GM10248 (cell line): ENCODE measurements at regions of chr11 and their contacts with region 1.

Region 1: DNA sequence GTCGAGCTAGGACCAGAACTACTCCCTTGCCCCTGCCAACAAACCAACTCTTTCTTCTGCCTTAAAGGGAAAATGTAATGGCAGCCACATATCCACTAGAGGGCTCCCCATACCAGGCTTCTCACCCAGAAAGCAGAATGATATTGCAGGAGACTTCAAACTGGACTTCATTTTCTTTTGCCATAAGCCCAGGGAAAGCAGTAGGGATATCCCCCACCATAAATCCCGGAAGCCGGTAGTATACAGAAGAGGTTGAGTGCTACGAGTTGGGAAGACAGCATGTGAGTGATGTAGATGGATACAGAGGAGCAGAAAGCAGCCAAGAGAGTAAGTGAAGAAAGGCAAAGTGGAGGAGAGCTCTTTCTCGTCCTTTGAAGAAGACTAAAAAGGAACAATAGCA is 12.1 kb downstream of the PLAAT5 start:
- DNase-seq: peak; percentile 79
- CTCF ChIP-seq: peak; percentile 92

Region 2: DNA sequence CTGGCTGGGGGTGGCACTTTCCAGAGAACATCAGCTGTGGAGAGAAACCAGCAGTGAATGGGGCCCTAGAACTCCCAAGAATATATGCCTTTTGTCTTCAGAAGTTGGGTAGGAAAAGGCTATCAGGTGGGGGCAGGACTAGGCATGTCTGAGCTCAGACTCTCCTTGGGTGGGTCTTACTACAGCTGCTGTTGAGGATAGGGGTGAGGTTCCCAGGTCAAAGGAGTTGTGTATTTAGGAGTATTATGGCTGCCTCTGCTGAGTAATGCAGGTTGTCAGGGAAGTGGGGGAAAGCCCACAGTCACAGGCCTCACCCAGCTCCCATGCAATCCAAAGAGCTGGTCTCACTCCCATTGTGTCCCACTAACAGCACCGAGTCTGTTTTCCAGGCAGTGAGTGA is 83.2 kb before region 1 on chr11:
- CTCF ChIA-PET with region 1: no interaction called
- POLR2A ChIA-PET with region 1: no interaction called
- DNase-seq: no peak
- CTCF ChIP-seq: no peak

Region 3: DNA sequence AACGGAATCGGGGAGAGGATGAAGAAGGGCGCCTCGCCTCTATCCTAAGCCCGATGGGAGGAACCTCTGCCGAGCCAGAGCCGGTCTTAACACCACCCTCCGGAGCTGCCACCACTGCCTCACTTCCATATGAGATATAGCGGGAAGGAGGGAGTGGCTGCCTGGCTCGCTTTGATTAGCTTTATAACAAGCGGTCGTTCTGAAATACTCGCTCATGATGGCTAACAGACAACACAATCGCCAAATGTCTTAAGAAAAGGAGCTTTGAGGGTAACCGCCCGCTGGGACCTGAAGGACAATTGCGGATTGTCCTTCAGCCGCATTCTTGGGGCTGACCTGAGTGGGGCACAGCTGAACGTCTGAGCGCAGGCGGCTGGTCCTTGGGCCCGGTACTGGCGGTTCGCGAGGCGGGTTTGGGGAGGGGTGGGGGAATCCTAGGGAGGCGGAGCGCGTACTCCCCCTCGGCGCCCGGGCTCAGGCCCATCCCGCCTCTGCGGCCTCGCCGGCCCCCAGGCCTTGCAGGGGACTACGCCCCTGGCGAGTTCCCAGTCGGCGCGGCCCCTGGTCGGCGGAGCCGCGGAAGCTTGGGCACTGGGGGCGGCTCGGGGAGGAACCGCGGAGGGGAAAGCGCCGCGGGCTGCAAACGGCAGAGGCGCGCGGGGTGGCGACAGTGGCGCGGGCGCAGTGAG is 11.8 kb after region 1 on chr11 and contains the start of gene PLAAT5:
- CTCF ChIA-PET with region 1: interaction called, 47 read pairs
- POLR2A ChIA-PET with region 1: no interaction called
- DNase-seq: no peak
- CTCF ChIP-seq: no peak

Region 4: DNA sequence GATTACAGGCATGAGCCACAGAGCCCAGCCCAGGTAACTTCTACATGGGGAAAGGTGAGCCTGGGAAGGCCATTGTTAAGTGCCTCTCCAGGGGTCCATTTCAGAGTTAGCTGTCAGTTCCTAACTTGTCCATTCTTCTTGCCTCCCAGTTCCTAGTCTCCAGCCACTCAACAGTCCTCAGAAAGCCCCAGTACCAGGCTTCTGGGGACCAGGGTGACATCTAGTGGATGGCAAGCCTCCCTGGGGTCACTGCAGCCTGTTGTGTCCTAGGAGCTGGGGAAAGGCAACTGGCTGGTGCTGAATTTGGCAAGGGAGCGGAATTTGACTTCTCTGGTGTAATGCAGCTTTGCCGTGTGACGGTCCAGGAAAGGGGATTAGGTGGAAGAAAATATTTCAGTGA is 29.1 kb after region 1 on chr11:
- CTCF ChIA-PET with region 1: interaction called, 25 read pairs
- POLR2A ChIA-PET with region 1: no interaction called
- DNase-seq: peak; percentile 41
- CTCF ChIP-seq: peak; percentile 36

Region 5: GRCh38 chr11:63635762-63636465 is 157.0 kb after region 1 on chr11:
- CTCF ChIA-PET with region 1: interaction called, 138 read pairs
- POLR2A ChIA-PET with region 1: no interaction called
- DNase-seq: peak; percentile 74
- CTCF ChIP-seq: peak; percentile 72

Region 6: DNA sequence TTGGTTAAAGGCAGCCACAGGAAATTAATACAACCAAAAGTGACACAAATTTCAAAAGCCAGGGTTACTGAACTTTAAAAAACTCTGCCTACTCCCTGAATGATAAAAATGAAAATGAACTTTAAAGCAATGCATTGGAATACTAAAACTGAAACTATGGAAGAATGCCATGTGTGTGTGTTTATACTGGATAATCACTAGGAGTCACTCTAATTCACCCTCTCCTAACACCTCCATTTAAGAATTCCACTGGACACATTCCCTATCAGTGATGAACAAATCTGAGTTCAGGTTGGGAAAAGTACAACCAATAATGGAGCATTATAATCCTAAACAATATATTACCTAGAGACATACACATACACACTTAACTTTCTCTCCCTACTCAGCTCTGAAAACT is 162.8 kb after region 1 on chr11:
- CTCF ChIA-PET with region 1: interaction called, 138 read pairs
- POLR2A ChIA-PET with region 1: no interaction called
- DNase-seq: no peak
- CTCF ChIP-seq: no peak